ENCODE measurements at regions of chr2 and their contacts with region 1.

Region 1: DNA sequence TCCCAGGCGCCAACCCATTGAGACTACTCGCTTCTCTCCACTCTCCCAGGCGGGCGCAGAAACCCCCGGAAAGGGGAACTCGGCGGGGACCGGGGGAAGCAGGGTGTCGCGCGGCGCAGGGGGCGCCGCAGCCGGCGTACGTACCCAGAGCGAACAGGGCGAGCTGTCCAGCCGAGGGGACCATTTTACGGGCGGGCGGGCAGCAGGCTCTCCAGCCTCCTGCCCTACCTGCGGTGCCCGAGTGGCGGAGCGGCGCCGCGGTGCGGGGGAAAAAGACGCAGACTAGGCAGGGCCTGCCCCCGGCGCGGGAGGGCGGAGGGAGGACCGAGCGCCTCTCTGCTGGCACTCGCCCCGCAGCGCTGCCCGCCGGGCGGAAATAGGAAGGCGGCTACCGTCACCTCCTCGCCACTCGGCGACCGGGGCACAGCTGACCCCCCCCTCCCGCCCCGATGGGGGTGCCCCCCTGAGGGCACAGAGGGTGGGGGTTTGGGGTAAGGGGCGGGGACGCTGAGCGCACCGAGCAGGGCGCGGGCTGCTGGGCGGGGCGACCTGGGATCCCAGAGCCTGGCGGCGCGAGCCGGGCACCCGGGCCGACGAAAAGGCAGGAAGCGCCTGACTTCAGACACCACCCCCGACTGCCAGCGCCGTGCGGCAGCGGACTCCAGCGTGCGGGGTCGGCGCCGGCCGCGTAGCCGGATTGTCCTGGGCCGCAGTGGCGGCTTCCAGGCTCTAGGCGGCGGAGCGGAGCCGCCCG is at the start of gene TGFA:
- DNase-seq: peak; percentile 88
- H3K4me3 Mint-ChIP-seq: peak within 1 kb of the TSS; percentile 85
- H3K27ac Mint-ChIP-seq: no peak within 1 kb of the TSS
- H3K4me1 Mint-ChIP-seq: peaks cover 15% of the 10 kb centered on the region
- H3K27me3 Mint-ChIP-seq: peaks cover 68% of the 10 kb centered on the region
- total RNA-seq, gene TGFA: not detected in 2 replicates

Region 2: DNA sequence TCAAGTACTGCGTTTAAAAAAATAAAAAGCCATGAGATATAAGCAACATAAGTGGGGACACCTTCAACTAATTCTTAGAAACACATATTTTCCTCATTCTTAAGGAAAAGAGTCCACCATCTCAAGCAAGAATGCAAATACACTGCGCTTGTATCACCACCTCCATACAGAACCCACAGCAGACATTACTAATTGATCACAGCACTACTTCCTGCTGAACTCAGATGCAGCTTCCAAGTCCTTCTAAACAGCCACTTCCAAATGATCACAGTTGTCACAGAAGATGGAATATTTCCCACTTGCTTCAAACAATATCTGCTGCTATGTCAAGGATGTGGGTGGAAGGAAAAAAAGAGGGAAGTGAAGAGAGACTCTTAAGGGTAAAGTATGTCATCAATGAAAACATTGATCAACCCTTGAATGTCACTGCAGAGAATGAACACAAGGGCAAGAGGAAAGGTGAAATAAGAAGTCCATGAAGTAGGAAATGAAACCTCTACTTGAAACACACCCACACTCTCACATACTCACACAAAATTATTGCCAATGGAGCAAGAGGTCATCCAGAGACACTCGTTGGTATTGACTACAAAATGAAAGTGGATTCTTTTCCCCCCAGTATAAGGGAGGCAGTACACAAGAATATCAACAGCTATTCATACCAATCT is 22.2 kb before region 1 on chr2:
- intact Hi-C with region 1: no loop called
- DNase-seq: no peak
- H3K4me3 Mint-ChIP-seq: no peak overlapping the region
- H3K27ac Mint-ChIP-seq: no peak overlapping the region
- H3K4me1 Mint-ChIP-seq: peaks cover 3% of the 10 kb centered on the region
- H3K27me3 Mint-ChIP-seq: peaks cover 7% of the 10 kb centered on the region

Region 3: DNA sequence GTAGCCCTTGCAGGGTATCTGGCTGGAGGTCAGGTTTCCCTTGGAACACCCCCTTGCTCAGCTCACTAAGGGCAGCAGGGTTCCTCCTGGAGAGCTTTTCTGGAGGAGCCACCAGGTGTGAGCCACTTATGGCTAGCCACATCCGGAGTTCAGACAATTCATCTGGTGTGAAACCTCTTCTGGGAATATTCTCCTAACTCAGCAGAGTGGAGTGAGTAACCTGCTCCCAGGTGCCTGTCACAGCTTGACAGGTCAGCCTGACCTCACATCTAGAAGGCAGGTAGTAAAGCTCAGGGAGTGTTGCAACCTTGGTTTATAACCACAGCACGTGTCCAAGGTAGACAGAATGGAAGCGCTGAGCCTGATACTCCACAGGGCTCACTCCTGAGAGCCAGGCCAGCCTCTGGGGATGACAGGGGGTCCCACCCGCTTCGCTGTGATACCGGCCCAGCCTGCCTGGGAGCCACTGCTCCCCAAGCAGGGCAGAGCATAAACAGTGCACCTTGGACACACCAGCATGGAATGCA is 62.5 kb after region 1 on chr2:
- intact Hi-C with region 1: loop called (anchors 5 kb)
- DNase-seq: no peak
- H3K4me3 Mint-ChIP-seq: no peak overlapping the region
- H3K27ac Mint-ChIP-seq: no peak overlapping the region
- H3K4me1 Mint-ChIP-seq: peaks cover 2% of the 10 kb centered on the region
- H3K27me3 Mint-ChIP-seq: peaks cover 17% of the 10 kb centered on the region

Measured in activated CD4-positive, alpha-beta T cell treated with anti-CD3 and anti-CD28 coated beads, Interleukin-2, amount 10 ng/mL, durations not matched to agents 24 days and 14 days (primary cell).